Esophagus squamous epithelium (tissue), 5 donors: ENCODE measurements at regions of chr18 and their contacts with region 1.

Region 1: DNA sequence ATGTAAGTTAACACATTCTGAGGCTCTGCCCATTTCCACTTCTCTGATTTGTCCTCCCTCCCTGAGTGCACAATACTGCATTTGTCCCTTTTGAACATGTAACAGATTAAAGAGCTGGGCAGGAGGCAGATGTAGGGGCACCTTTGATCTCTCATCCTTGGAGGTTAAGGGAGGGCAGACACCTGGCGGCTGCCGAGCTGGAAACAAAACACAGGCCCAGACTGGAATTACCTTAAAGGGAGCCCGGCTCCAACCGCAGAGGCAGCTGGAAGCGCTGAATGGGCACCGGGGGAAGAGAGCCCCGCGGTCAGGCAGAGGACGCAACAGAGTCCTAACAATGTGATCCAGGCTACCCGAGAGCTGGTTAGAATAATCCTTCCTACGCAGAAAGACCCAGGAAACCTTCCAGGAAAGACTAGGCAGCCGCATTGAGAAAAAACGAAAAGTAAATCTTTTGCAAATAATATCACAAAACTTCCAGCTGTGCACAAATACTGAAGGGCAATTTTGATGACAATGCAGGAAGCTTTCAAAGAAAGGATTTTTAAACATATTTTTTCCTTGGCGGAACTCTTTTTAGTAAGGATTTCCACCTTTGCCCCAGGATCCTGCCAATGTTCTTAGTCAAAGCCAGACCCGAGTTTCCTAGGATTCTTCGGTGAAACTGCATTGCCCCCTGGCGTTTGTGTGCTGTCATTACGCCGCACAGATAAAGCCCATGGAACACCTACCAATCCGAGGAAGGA is 216.0 kb downstream of the TGIF1 start:
- DNase-seq: peak; percentile 3
- H3K4me3 ChIP-seq: peak overlapping the region; percentile 2 to 46 (median 28)
- H3K27ac ChIP-seq: peak overlapping the region; percentile 63 to 83 (median 64)
- H3K4me1 ChIP-seq: peaks cover 4 to 18% (median 10%) of the 10 kb centered on the region in 3 donors
- H3K27me3 ChIP-seq: no peaks in the 10 kb centered on the region
- CTCF ChIP-seq: peak; percentile 74 to 98 (median 97)
- POLR2A ChIP-seq: no peak

Region 2: DNA sequence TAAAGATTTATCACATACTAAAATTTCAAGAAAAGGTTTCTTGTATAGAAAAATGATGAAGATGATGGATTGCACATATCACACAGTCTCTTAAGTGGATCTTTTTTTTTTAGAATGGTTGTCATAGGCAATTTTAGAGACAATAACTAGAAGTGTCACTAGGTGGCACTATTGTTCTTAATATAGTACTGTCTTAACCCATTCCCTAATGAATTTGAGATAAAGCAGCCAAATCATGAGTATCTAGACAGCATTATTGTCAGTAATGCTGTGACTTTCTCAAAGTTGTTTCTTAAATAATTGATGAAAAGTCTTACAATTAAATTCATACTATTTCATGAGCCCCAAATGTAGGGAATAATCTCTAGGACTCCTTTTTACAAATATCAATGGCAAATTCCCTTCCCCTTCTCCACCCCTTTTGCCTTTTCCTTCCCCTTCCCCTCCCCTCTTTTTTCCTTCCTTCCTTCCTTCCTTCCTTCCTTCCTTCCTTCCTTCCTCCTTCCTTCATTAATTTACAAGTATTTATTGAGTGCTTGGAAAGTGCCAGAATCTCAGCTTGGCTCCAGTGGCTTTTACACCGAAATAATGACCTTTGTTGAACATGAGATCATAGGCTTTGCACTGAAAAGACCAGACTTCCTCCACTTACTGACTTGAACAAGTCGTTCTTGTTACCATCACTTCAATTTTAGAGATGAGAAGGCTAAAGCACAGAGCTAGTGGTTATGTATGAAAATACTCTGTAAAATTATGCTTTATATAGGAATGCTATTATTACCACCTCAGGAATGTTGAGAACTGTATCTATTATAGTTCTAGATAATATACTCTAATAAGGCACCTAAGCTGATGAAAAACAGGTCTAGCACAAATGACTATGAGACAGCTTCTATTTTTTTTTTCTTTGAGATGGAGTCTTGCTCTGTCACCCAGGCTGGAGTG is 384.2 kb before region 1 on chr18:
- intact Hi-C with region 1: loop called (anchors 5 kb)
- DNase-seq: no peak
- H3K4me3 ChIP-seq: no peak overlapping the region
- H3K27ac ChIP-seq: peak overlapping the region in 2 of 4 donors; percentile 11 to 17
- H3K4me1 ChIP-seq: peaks cover 0 to 26% (median 5%) of the 10 kb centered on the region in 3 donors
- H3K27me3 ChIP-seq: no peaks in the 10 kb centered on the region
- CTCF ChIP-seq: peak; percentile 54 to 81 (median 62)
- POLR2A ChIP-seq: no peak

Region 3: DNA sequence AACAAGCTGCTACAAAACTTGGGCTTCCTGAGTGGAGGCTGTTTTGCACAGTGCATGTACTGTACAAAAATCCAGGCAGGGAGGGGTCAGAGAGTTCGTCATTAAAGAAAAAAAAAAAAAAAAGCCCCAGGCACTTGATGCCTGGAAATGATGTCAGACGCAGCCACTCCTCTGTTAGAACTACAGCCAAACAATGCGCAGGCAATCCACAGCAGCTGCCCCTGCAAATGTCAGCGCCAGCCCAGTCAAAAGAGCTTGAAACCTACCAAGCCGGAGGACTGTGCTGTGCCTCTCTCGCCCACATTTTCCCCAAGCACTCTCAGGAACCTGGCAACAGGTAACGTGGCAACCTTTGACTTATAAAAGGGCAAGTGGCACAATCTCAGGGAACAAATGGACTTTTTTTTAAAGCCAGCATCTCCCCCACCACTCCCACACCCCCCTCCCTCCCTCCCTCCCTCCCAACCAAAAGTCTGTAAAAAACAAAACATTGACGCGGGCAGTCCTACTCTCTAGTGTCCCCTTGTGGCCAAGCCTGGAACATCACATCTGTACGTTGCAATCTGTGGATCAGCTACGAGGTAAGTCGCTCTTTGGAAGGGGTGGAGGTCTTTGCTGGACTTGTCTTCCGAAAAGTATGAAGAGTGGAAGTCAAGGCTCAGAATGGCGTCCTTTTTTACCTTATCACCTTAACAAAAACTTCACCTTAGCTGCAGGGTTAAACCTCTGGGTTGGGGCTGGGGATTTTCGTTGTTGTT is 71.9 kb before region 1 on chr18:
- intact Hi-C with region 1: loop called (anchors 10 kb)
- DNase-seq: peak; percentile 46
- H3K4me3 ChIP-seq: peak overlapping the region; percentile 20 to 65 (median 48)
- H3K27ac ChIP-seq: peak overlapping the region; percentile 91 to 99 (median 97)
- H3K4me1 ChIP-seq: peaks cover 34 to 81% (median 49%) of the 10 kb centered on the region in 3 donors
- H3K27me3 ChIP-seq: no peaks in the 10 kb centered on the region
- CTCF ChIP-seq: peak; percentile 89 to 95 (median 92)
- POLR2A ChIP-seq: peak in 1 of 4 donors; percentile 72